Activated CD4-positive, alpha-beta T cell treated with anti-CD3 and anti-CD28 coated beads for 36 hours (primary cell): ENCODE measurements at regions of chr9 and their contacts with region 1.

Region 1: GRCh38 chr9:133149126-133150107 is 14.3 kb downstream of the GBGT1 start:
- DNase-seq: peak; percentile 92
- ATAC-seq: peak; percentile 68
- H3K4me3 Mint-ChIP-seq: peak overlapping the region; percentile 63
- H3K27ac Mint-ChIP-seq: peak overlapping the region; percentile 67
- H3K4me1 Mint-ChIP-seq: peaks cover 27% of the 10 kb centered on the region
- H3K27me3 Mint-ChIP-seq: no peaks in the 10 kb centered on the region

Region 2: GRCh38 chr9:133023117-133023890 is 126.1 kb before region 1 on chr9:
- CTCF ChIA-PET with region 1: interaction called, 8 read pairs
- POLR2A ChIA-PET with region 1: no interaction called
- intact Hi-C with region 1: loop called in 1 of 2 experiments (anchors 1 kb)
- DNase-seq: peak; percentile 87
- ATAC-seq: peak; percentile 70
- H3K4me3 Mint-ChIP-seq: peak overlapping the region; percentile 49
- H3K27ac Mint-ChIP-seq: peak overlapping the region; percentile 74
- H3K4me1 Mint-ChIP-seq: peaks cover 18% of the 10 kb centered on the region
- H3K27me3 Mint-ChIP-seq: no peaks in the 10 kb centered on the region

Region 3: GRCh38 chr9:133103183-133103986 is 46.0 kb before region 1 on chr9:
- CTCF ChIA-PET with region 1: interaction called, 24 read pairs
- POLR2A ChIA-PET with region 1: interaction called, 3 read pairs
- intact Hi-C with region 1: loop called (anchors 1 kb)
- DNase-seq: peak; percentile 68
- ATAC-seq: peak; percentile 60
- H3K4me3 Mint-ChIP-seq: no peak overlapping the region
- H3K27ac Mint-ChIP-seq: no peak overlapping the region
- H3K4me1 Mint-ChIP-seq: no peaks in the 10 kb centered on the region
- H3K27me3 Mint-ChIP-seq: no peaks in the 10 kb centered on the region

Region 4: DNA sequence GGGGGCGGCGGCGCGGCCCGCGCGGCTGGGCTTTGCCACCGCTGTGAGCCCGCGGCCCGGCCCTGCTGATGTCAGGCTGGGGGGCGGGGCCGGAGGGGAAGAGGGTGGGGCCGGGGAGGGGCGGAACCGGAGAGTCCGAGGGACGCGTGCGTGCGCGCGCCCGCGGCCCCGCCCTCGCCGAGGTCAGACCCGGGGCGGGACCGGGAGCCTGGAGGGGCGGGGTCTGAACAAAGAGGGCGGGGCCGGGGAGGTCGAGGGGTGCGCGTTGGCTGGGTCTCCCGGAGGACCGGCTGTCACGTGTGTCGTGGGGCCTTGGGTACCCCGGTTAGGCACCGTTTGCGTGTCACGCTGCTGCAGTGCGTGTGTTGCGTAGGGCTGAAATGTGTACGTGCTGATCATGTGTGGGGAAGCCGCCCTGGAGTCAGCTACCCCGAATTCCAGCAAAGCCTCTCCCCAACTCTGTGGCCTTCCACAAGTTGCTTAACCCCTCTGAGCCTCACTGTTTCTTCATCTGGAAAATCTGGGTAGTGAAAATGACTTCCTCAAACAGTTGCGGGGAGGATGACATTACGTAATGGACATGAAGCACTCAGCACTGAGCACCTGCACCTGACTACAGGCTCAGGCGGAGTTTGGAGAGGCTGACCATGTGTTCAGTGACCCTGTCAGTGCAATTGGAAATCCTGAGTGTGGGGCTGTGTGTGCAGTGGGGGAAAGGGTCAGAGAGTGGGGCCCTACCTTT is 28.0 kb before region 1 on chr9 and contains the start of gene RALGDS:
- CTCF ChIA-PET with region 1: interaction called, 139 read pairs
- POLR2A ChIA-PET with region 1: interaction called, 6 read pairs
- intact Hi-C with region 1: loop called (anchors 1 kb)
- DNase-seq: peak; percentile 96
- ATAC-seq: peak; percentile 82
- H3K4me3 Mint-ChIP-seq: peak within 1 kb of the TSS; percentile 71
- H3K27ac Mint-ChIP-seq: peak within 1 kb of the TSS; percentile 80
- H3K4me1 Mint-ChIP-seq: peaks cover 58% of the 10 kb centered on the region
- H3K27me3 Mint-ChIP-seq: no peaks in the 10 kb centered on the region
- total RNA-seq, gene RALGDS: 65.1 to 78.6 TPM

Region 5: DNA sequence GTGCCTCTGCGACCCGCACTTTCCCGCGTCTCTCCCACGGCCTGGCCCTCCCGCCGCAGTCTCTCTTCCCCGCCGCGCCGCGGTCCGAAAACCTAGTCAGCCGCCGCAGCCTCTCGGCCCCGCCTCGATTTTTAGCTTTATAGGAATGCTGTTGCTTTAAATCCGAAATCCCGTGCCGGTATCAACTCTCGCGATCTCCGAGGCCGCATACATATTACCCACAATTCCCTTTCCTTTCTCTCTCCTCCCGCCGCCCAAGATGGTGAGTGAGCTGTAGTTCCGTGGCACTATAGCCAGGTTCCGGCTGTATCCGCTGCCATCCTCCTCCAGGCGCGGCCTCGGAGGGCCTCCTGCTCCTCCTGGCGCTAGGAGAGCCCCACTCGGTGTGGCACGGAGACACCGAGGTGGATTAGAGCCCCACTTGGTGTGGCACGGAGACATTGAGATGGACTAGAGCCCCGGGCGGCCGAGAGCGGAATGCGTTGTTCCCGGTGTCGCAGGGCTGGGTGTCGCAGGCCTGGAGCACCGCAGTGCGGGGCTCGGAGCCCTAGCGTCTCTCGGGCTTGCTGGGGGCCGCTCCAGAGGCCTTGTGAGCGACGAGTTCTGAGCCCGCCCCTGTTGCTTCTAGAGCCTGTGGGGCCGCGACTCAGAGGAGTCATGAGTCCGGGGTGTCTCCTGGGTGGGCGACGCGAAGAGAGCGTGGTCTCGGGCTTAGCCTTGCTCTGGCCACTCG is 198.7 kb after region 1 on chr9 and contains the starts of genes MED22 and RPL7A:
- CTCF ChIA-PET with region 1: no interaction called
- POLR2A ChIA-PET with region 1: no interaction called
- intact Hi-C with region 1: loop called in 1 of 2 experiments (anchors 1 kb)
- DNase-seq: peak; percentile 96
- ATAC-seq: peak; percentile 83
- H3K4me3 Mint-ChIP-seq: peak within 1 kb of the TSS; percentile 97
- H3K27ac Mint-ChIP-seq: peak within 1 kb of the TSS; percentile 97
- H3K4me1 Mint-ChIP-seq: peaks cover 36% of the 10 kb centered on the region
- H3K27me3 Mint-ChIP-seq: no peaks in the 10 kb centered on the region
- total RNA-seq, gene MED22: 22.9 to 26.4 TPM
- total RNA-seq, gene RPL7A: 3,179 to 3,246 TPM